ENCODE measurements at regions of chr22 and their contacts with region 1.

Region 1: DNA sequence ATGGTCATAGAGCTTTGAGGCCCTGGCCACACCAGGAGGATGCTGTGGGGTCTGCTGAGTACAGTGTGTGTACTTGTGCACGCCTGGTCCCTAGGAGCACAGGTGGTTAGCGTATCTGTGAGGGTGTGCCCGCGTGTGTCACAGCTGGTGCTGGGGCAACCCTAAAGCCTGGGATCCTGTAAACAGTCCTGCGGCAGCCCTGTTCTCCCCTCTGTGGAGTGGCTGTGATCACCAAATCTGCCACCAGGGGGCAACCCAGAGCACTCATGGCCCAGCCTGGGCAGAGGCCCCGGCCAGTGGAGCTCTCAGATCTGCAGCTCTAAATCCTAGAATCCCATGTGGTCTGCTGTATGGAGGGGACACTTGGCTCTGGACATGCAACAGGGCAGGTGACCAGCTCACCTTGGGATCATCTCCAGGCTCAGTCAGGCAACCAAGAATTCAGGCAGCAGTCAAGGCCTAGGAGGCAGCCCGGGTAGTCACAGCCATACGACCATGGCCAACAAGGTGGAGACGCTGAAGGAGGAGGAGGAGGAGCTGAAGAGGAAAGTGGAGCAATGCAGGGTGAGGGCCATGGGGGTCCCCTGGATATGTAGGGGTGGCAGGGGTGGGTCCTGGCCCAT is 3.9 kb downstream of the SH3BP1 start:
- DNase-seq: peak; percentile 93
- ATAC-seq: peak; percentile 77
- H3K4me3 Mint-ChIP-seq: no peak overlapping the region
- H3K27ac Mint-ChIP-seq: peak overlapping the region; percentile 85
- H3K4me1 Mint-ChIP-seq: peaks cover 13% of the 10 kb centered on the region
- H3K27me3 Mint-ChIP-seq: no peaks in the 10 kb centered on the region
- CTCF ChIP-seq: peak; percentile 86

Region 2: GRCh38 chr22:37552524-37553163 is 90.7 kb before region 1 on chr22:
- CTCF ChIA-PET with region 1: no interaction called
- POLR2A ChIA-PET with region 1: no interaction called
- DNase-seq: peak; percentile 67
- ATAC-seq: peak; percentile 72
- H3K4me3 Mint-ChIP-seq: no peak overlapping the region
- H3K27ac Mint-ChIP-seq: peak overlapping the region; percentile 19; the same call in 1 of the 2 replicates
- H3K4me1 Mint-ChIP-seq: peaks cover 42% of the 10 kb centered on the region
- H3K27me3 Mint-ChIP-seq: peaks cover 30% of the 10 kb centered on the region
- CTCF ChIP-seq: no peak

Region 3: DNA sequence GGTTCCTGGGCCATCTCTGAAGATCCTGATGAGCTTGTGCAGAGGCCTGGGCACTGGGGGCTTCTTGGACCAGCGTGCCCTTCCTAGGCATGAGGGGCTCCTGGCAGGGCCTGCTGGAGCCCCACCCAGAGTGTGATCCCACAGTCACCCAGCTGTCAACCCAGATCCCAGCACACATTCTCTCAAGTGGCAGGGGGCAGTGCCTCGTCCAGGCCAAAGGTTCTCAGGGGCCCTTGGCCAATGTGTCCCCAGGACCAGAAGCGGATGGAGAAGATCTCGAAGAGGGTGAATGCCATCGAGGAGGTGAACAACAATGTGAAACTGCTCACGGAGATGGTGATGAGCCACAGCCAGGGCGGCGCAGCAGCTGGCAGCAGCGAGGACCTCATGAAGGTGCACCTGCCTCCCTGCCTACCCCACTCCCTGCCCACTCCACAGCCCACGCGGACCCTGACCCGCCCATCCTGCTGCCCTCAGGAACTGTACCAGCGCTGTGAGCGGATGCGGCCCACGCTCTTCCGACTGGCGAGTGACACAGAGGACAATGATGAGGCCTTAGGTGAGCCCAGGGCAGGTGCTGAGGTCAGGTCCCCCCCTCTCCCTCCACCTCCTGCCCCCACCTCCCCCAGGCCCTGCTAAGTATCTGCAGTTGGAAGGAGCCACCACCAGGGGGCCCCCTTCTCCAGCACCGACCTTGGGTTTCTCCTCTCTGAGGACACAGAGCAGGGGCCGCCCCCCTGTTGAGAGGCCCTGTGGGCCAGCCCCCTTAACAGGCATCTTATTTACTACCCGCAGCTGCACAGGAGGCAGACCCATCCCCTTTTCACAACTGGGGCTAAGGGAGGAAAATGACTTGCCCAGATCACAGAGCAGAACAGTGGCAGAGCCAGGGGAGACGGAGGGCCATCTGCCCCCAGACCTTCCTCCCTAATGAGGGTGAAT is 20.0 kb before region 1 on chr22:
- CTCF ChIA-PET with region 1: interaction called, 152 read pairs
- POLR2A ChIA-PET with region 1: no interaction called
- DNase-seq: peak; percentile 88
- ATAC-seq: peak; percentile 89
- H3K4me3 Mint-ChIP-seq: no peak overlapping the region
- H3K27ac Mint-ChIP-seq: no peak overlapping the region
- H3K4me1 Mint-ChIP-seq: peaks cover 3% of the 10 kb centered on the region
- H3K27me3 Mint-ChIP-seq: no peaks in the 10 kb centered on the region
- CTCF ChIP-seq: peak; percentile 88

Region 4: DNA sequence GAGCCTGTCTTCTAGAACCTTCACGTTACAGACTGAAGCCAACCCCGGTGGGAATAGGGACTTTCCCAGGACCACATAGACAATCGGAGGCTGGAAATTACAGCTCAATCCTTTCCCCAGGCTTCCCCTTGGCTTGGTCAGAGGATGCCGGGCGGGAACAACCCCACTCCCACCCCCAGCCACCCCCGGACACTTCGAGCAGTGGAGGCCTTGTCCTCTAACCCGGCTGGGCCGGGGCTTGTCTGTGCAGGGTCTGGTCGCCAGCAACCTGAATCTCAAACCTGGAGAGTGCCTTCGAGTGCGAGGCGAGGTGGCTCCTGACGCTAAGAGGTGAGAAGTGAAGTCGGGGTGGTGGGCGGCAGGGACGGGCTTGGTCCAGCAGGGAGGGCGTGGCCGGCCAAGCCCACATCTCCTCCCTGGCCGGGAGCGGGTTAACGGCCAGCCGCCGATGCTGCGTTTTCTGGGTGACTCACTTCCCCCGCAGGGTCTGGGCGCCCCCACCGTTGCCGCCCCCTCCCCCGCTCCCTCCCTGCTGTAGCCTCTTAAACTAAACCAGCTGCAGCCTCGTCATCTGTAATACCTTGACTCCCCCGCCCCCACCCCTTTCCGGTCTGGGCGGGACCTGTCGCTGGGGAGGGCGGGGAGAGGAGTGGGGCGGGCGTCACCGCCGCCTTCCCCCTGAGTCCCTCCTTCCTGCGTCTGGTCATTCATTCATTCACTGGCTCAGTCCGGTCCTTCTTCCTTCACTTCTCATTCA is 33.6 kb after region 1 on chr22:
- CTCF ChIA-PET with region 1: interaction called, 85 read pairs
- POLR2A ChIA-PET with region 1: no interaction called
- DNase-seq: peak; percentile 86
- ATAC-seq: peak; percentile 74
- H3K4me3 Mint-ChIP-seq: peak overlapping the region; percentile 72
- H3K27ac Mint-ChIP-seq: peak overlapping the region; percentile 84
- H3K4me1 Mint-ChIP-seq: peaks cover 13% of the 10 kb centered on the region
- H3K27me3 Mint-ChIP-seq: peaks cover 18% of the 10 kb centered on the region
- CTCF ChIP-seq: no peak

Region 5: DNA sequence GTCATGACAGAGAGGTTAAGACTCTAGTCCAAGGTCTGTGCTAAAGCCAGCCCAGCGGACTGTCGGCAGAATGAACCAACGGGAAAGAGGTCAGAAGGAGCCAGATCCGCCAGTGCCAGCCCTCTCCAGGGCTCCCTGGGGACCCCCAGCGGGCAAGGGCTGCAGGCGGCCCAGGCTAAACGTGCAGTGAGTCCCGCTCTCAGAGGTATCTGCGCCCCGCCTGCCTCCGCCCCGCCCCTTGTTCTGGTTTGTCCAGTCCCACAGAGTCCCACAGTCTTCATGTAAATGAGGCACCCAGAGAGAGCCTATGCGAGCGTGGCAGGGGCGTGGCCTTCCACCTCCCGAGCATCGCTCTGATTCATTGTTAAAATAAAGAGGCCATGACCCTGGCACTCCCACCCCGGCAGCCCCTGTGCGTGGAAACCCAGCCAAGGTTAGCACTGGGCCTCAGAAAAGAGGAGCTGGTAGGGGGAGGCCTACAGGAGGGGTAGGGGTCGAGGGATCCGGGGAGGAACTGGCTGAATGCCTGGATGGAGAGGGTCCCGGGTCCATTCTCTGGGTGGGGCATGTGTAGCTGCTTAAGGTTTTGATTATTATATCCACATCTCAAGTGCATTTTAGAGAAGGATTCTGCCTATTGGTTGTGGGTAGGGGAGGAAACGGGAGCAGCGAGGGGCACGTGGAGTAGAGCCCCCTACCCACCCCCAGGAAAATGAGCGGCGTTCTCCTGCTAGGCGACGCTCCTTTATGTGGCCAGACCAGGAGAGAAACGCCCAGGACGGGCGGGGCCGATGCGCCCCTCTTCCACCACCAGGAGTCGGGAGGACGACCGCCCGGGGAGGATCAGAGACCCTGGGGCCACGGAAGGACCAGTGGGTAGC is 53.6 kb after region 1 on chr22 and contains the start of gene TRIOBP:
- CTCF ChIA-PET with region 1: interaction called, 29 read pairs
- POLR2A ChIA-PET with region 1: interaction called, 4 read pairs
- DNase-seq: peak; percentile 99
- ATAC-seq: peak; percentile 98
- H3K4me3 Mint-ChIP-seq: peak within 1 kb of the TSS; percentile 96
- H3K27ac Mint-ChIP-seq: peak within 1 kb of the TSS; percentile 91
- H3K4me1 Mint-ChIP-seq: peaks cover 11% of the 10 kb centered on the region
- H3K27me3 Mint-ChIP-seq: no peaks in the 10 kb centered on the region
- CTCF ChIP-seq: no peak
- total RNA-seq, gene TRIOBP: 54.0 to 58.9 TPM (median 56.8 TPM) in 3 replicates

Region 6: GRCh38 chr22:37781479-37781911 is 138.2 kb after region 1 on chr22:
- CTCF ChIA-PET with region 1: interaction called, 13 read pairs
- POLR2A ChIA-PET with region 1: no interaction called
- DNase-seq: peak; percentile 38
- ATAC-seq: peak; percentile 71
- H3K4me3 Mint-ChIP-seq: no peak overlapping the region
- H3K27ac Mint-ChIP-seq: no peak overlapping the region
- H3K4me1 Mint-ChIP-seq: peaks cover 12% of the 10 kb centered on the region; the same call in 1 of the 2 replicates
- H3K27me3 Mint-ChIP-seq: peaks cover 59% of the 10 kb centered on the region
- CTCF ChIP-seq: no peak

Region 7: DNA sequence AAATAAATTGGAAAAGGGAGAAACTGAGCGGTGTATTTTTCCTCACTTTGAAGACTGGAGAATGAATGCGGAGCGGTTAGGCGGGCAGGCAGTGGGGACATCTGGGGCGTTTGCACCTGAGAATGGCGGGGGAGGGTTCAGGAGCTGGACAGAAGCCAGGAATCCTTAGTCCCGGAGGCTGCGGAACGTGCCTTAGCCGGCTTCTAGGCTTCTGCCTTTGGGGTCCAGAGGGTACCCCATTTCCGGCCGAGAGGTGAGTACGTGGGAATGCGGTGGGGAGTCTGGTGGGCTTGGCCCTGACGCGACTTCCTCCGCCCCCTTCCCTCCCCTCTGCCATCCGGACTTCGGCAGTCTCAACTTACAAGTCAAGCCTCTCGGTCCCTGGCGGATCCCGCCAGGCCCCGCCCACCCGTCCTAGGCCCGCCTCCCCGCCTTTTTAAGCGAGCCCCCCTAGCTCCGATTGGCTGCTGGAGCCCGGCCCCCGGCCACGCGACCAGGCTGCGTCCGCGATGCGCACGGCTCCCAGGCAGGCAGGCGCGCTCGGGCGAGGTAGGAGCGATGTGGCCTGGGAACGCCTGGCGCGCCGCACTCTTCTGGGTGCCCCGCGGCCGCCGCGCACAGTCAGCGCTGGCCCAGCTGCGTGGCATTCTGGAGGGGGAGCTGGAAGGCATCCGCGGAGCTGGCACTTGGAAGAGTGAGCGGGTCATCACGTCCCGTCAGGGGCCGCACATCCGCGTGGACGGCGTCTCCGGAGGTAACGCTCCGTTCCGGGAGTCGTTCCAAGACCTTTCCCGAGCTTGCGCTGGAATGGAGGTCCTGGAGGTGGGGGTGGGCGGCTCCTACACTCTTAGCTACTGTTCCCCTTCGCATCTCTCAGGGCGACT is 164.3 kb after region 1 on chr22 and contains the start of gene GCAT:
- CTCF ChIA-PET with region 1: interaction called, 13 read pairs
- POLR2A ChIA-PET with region 1: no interaction called
- DNase-seq: peak; percentile 98
- ATAC-seq: peak; percentile 87
- H3K4me3 Mint-ChIP-seq: peak within 1 kb of the TSS; percentile 84
- H3K27ac Mint-ChIP-seq: no peak within 1 kb of the TSS
- H3K4me1 Mint-ChIP-seq: peaks cover 41% of the 10 kb centered on the region
- H3K27me3 Mint-ChIP-seq: peaks cover 59% of the 10 kb centered on the region
- CTCF ChIP-seq: no peak
- total RNA-seq, gene GCAT: 33.0 to 36.4 TPM (median 36.3 TPM) in 3 replicates

Measured in WTC11 (cell line).